Sciatic nerve (tissue), 2 donors: ENCODE measurements at regions of chr2 and their contacts with region 1.

Region 1: DNA sequence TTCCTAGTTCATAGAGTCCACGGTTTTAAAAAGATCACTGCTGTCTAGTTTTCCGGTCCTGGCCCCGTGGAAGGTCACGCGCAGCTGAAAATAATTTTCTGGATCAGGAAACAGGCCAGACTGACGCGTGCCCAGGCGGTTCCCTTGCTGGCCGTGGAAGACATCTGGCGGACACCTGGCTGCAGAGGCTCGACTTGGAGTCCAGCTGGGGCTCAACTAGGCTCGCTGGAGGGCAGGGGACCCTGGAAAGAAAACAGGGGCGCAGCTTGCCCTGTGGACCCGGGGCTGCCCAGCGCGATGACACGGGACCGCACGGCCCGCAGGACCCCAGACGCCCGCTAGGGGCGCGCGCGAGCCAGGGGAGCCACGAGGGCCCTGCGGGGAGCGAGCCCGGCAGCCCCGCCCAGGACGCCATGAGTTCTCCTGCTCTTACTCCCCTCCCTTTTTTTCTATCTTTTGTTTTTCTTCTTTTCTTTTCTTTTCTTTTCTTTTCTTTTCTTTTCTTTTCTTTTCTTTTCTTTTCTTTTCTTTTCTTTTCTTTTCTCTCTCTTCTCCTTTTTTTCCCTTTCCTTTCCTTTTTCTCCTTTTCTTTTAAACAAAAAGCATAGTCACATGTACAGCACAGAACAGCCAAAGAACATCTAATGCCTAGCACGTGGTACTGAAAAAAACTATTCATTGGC is 43.2 kb upstream of the UBE2F start:
- DNase-seq: peak; percentile 87
- ATAC-seq: peak; percentile 94

Region 2: GRCh38 chr2:236964291-236964690 is 959.3 kb before region 1 on chr2:
- intact Hi-C with region 1: loop called (anchors 5 kb)
- DNase-seq: peak; percentile 56
- ATAC-seq: peak; percentile 89